BJ (cell line): ENCODE measurements at regions of chr11 and their contacts with region 1.

Region 1: GRCh38 chr11:778976-779954 is 2.0 kb upstream of the GATD1 start:
- DNase-seq: no peak
- H3K4me3 ChIP-seq: no peak overlapping the region
- H3K27me3 ChIP-seq: no peaks in the 10 kb centered on the region
- CTCF ChIP-seq: no peak

Region 2: DNA sequence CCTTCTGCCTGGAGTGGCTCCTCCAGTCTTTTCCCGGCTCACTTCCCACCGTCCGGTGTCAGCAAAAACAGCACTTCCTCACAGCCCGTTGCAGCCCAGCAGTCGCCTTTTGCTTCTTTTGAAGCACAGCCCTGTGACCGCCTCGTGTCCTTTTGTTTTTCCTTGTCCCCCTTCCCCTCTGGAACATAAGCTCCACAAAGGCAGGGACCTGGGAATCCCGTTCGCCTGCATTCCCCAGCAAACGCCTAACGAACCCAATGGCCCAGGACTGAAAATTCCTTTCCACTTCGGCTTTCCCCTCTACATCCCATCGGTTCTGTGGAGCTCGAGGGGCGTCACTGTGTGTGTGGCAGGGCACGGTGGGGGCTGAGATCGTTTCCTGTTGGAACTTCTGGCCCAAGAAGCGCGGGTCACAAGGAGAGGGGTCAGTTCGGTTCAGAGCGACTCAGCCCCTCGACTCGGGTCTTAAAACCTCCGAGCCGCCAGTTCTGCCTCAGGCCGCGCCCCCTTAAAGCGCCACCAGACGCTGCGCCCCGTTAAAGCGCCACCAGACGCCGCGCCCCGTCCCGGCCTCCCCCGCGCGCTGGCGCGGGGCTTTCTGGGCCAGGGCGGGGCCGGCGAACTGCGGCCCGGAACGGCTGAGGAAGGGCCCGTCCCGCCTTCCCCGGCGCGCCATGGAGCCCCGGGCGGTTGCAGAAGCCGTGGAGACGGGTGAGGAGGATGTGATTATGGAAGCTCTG is 570.9 kb before region 1 on chr11:
- CTCF ChIA-PET with region 1: no interaction called
- POLR2A ChIA-PET with region 1: interaction called, 21 read pairs
- DNase-seq: no peak
- H3K4me3 ChIP-seq: peak overlapping the region; percentile 96
- H3K27me3 ChIP-seq: no peaks in the 10 kb centered on the region
- CTCF ChIP-seq: no peak

Region 3: DNA sequence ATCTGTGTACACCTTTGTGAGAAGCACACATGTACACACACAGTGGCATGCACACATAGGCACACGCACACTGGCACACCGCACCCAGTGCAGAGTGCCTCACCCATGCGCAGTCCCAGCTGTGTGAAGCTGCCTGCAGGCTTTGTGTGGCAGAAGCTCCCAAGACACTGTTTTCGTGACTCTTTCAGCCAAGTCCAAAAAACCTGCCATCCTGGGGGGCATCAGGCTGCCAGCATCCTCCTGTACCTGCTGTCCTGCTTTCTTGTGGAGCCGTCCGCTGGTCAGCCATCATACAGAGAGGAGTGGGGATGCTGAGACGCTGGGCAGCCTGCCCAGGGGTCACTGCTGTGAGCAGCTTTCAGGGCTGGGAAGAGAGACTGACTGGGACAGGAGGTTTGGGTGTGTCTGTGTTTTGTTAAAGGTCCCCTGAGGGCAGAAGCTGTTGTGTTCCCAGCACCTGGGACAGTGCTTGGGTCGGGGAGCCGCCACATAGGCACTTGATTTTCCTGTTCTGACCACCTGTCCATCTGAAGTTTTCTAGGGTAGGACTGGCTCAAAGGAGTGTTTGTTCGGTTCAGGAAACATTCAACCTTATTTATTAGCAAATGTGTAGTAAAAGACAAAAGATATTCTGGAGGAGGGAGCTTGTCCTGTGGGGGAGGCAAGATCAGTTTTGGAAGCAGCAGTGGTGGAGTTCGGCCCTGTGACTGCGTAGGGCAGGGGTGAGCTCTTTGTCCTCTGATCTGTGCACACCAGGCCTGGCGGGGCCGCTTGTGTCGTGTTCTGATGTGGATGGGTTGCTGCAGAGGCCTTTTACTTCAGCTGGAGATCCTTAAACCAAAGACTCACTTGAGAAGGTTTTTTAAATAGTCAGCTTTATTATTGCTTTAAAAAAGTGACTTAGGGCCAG is 176.1 kb after region 1 on chr11:
- CTCF ChIA-PET with region 1: no interaction called
- POLR2A ChIA-PET with region 1: no interaction called
- DNase-seq: no peak
- H3K4me3 ChIP-seq: no peak overlapping the region
- H3K27me3 ChIP-seq: no peaks in the 10 kb centered on the region
- CTCF ChIP-seq: no peak